Activated CD4-positive, alpha-beta memory T cell treated with anti-CD3 and anti-CD28 coated beads, Interleukin-2, amount 10 ng/mL, durations not matched to agents 7 days and 5 days (primary cell): ENCODE measurements at regions of chr1 and their contacts with region 1.

Region 1: DNA sequence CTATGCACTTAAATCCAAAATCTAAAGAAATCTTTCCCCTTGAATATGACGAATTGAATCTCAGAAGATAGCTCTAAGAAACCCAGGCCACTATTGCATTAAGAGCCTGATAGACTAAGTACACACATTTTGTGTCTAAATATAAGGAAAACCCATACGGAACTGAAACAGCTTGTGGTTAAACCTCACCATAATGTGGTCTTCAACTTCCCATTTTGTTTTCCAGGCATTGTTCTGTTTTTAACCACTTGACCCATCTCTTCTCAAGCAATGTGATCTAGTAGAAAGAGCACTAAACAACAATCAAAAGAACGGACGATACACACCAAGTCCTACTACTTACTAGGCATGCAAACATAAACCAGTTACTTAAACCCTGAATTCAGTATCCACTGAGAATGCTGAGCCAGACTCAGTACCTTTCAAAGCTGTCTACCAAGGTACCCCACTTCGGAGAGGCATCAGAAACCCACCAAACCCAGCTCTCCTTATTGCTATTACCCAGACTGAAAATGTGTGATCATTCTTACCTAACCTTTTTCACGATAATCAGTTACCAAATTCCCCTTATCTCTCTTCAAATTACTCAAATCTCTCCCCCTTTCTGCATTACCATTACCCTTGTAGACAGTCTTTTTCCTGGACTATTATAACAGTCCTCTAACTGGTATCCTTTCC is 12.8 kb downstream of the OTUD7B start:
- DNase-seq: no peak
- H3K4me3 Mint-ChIP-seq: no peak overlapping the region
- H3K27ac Mint-ChIP-seq: no peak overlapping the region
- H3K4me1 Mint-ChIP-seq: peaks cover 43% of the 10 kb centered on the region
- H3K27me3 Mint-ChIP-seq: no peaks in the 10 kb centered on the region

Region 2: GRCh38 chr1:150010393-150011115 is 12.8 kb after region 1 on chr1 and contains the start of gene OTUD7B:
- CTCF ChIA-PET with region 1: no interaction called
- POLR2A ChIA-PET with region 1: interaction called, 12 read pairs
- DNase-seq: peak; percentile 80
- H3K4me3 Mint-ChIP-seq: peak within 1 kb of the TSS; percentile 91
- H3K27ac Mint-ChIP-seq: peak within 1 kb of the TSS; percentile 76
- H3K4me1 Mint-ChIP-seq: peaks cover 35% of the 10 kb centered on the region
- H3K27me3 Mint-ChIP-seq: no peaks in the 10 kb centered on the region
- total RNA-seq, gene OTUD7B: 15.9 to 17.4 TPM

Region 3: DNA sequence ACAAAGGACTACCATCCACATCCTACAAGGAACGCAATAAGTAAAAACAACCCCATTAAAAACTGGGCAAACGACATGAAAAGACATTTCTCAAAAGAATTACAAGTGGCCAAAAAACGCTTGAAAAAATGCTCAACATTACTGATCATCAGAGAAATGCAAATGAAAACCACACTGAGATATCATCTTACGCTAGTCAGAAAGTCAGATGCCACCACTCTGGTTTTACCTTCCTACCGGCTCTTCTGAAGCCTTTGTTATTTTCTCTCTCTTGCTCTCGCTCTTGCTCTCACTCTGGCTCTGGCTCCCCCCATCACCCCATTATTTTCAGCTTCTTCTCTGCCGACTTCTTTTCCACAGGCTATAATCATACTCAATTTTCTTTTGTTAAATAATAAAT is 108.6 kb after region 1 on chr1:
- CTCF ChIA-PET with region 1: no interaction called
- POLR2A ChIA-PET with region 1: no interaction called
- DNase-seq: no peak
- H3K4me3 Mint-ChIP-seq: peak overlapping the region; percentile 35
- H3K27ac Mint-ChIP-seq: peak overlapping the region; percentile 80
- H3K4me1 Mint-ChIP-seq: peaks cover 59% of the 10 kb centered on the region
- H3K27me3 Mint-ChIP-seq: no peaks in the 10 kb centered on the region

Region 4: GRCh38 chr1:150663322-150663721 is 665.6 kb after region 1 on chr1:
- CTCF ChIA-PET with region 1: no interaction called
- POLR2A ChIA-PET with region 1: no interaction called
- DNase-seq: no peak
- H3K4me3 Mint-ChIP-seq: no peak overlapping the region
- H3K27ac Mint-ChIP-seq: no peak overlapping the region
- H3K4me1 Mint-ChIP-seq: no peaks in the 10 kb centered on the region
- H3K27me3 Mint-ChIP-seq: no peaks in the 10 kb centered on the region